BJ (cell line): ENCODE measurements at regions of chr10 and their contacts with region 1.

Region 1: GRCh38 chr10:77522268-77522809 is 115.3 kb downstream of the KCNMA1 start:
- DNase-seq: no peak
- H3K4me3 ChIP-seq: no peak overlapping the region
- H3K27me3 ChIP-seq: no peaks in the 10 kb centered on the region
- CTCF ChIP-seq: no peak

Region 2: DNA sequence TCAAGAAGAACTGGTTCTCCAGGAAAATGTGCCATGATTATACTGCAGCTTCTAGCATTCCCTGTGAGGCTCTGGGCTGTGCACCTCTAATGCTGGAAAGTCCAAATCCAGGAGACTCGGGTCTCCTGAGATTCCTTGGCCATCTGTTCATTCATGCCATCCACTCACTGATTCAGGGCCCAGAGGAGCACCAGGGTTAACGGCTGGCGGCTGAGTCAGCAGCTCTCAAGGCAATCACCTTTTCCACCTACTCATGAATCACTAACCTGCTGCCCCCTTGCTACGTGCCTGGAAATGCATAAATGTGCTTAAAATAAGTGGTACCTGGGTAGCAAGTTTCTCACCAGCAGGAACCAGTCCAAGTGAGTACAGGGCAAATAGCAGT is 17.5 kb before region 1 on chr10:
- CTCF ChIA-PET with region 1: interaction called, 5 read pairs
- POLR2A ChIA-PET with region 1: interaction called, 15 read pairs
- DNase-seq: no peak
- H3K4me3 ChIP-seq: no peak overlapping the region
- H3K27me3 ChIP-seq: no peaks in the 10 kb centered on the region
- CTCF ChIP-seq: no peak